HepG2 (cell line): ENCODE measurements at regions of chr5 and their contacts with region 1.

Region 1: DNA sequence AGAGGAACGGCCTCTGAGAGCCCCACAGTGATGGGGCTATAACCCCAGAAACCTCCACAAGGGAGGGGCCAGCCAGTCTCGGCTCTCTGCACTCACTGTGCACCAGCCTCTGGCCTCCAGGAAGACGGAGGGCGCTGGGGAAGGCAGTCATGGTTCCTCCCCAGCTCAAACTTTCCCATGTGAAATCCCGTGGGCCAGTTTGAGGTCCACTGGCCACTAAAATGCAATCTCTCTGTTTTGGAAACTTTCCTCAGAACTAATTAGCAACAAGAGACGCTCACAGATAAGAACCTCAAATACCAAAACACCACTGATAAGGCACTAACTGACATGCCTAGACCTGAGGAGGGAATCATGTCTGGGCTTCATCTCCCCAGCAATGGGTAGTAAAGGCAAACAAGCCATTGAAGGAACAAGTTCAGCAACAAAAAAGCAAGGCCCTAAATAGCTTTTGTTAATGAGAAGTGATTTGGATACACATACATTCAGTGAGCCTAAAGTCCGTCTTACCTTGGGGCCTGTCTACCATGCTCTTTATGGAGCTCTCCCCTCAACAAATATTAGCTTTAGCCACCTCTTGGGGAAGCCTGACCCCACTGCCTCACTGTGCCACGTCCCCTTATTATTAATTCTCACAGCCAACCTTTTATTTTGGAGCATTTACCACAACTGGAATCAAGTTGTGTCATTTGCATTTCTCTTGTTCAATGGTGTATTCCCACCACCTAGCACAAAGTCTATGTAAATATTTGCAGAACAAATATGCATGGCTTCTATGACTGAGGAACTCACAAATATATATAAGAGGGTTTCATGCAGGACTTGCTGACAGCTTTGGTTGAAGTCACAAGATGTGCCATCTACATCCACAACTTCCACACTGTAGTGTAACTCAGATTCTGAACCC is 56.1 kb upstream of the GLRX start:
- DNase-seq: peak; percentile 95
- ATAC-seq: peak; percentile 79
- H3K4me3 ChIP-seq: peak overlapping the region; percentile 24 to 60 (median 24); a peak in 4 of 6 replicates
- H3K27ac ChIP-seq: peak overlapping the region; percentile 96
- H3K4me1 ChIP-seq: peaks cover 83% of the 10 kb centered on the region
- H3K27me3 ChIP-seq: no peaks in the 10 kb centered on the region
- CTCF ChIP-seq: peak; percentile 19; the same call in 1 of the 2 replicates
- EP300 ChIP-seq: peak in 1 of 2 experiments; percentile 86; a peak in 2 of 4 replicates
- POLR2A ChIP-seq: peak; percentile 41 to 54; a peak in 2 of 4 replicates
- RAD21 ChIP-seq: no peak

Region 2: GRCh38 chr5:95142145-95142544 is 736.5 kb before region 1 on chr5:
- CTCF ChIA-PET with region 1: no interaction called
- POLR2A ChIA-PET with region 1: no interaction called
- in situ Hi-C with region 1: no loop called
- intact Hi-C with region 1: no loop called
- DNase-seq: no peak
- ATAC-seq: no peak
- H3K4me3 ChIP-seq: no peak overlapping the region
- H3K27ac ChIP-seq: no peak overlapping the region
- H3K4me1 ChIP-seq: peaks cover 6% of the 10 kb centered on the region; the same call in 1 of the 2 replicates
- H3K27me3 ChIP-seq: no peaks in the 10 kb centered on the region; a peak in 1 of 5 replicates
- CTCF ChIP-seq: no peak
- EP300 ChIP-seq: no peak
- POLR2A ChIP-seq: no peak
- RAD21 ChIP-seq: no peak

Region 3: GRCh38 chr5:95864944-95865504 is 13.6 kb before region 1 on chr5:
- CTCF ChIA-PET with region 1: no interaction called
- POLR2A ChIA-PET with region 1: interaction called, 128 read pairs
- in situ Hi-C with region 1: no loop called
- intact Hi-C with region 1: loop called (anchors 1 kb)
- DNase-seq: peak; percentile 99
- ATAC-seq: peak; percentile 91
- H3K4me3 ChIP-seq: peak overlapping the region in 2 of 3 experiments; percentile 32 to 41; a peak in 3 of 6 replicates
- H3K27ac ChIP-seq: peak overlapping the region; percentile 98
- H3K4me1 ChIP-seq: peaks cover 72% of the 10 kb centered on the region
- H3K27me3 ChIP-seq: no peaks in the 10 kb centered on the region
- CTCF ChIP-seq: no peak
- EP300 ChIP-seq: peak; percentile 48 to 89; a peak in 2 of 4 replicates
- POLR2A ChIP-seq: peak; percentile 54 to 73; a peak in 3 of 4 replicates
- RAD21 ChIP-seq: no peak

Region 4: DNA sequence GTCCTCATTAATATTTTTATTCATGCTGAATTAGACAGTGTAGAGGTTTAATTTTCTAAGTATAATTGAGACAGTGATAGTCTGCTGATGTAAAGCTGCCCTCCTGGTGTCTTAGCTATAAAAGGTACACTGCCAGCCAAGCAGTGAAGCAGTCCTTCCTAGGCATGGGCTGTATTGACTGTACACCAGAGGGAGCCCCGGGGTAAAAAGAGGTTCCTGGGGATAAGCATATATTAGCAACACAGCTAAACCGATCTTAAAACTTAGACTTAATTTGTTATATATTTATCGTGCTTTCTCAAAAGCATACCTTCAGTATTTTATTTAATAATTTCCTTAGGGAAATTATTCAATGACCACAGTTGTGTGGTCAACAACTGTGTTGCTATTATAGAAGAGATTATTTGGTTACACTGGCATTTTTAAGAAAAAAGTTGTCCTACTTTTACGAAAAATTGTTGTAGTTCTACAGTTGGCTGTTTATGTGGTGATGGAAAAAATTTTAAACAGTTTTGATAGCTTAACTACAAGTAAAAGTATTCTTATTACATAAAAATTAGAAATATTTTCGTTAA is 14.2 kb after region 1 on chr5:
- CTCF ChIA-PET with region 1: no interaction called
- POLR2A ChIA-PET with region 1: interaction called, 17 read pairs
- in situ Hi-C with region 1: no loop called
- intact Hi-C with region 1: no loop called
- DNase-seq: peak; percentile 48
- ATAC-seq: peak; percentile 76
- H3K4me3 ChIP-seq: no peak overlapping the region
- H3K27ac ChIP-seq: no peak overlapping the region
- H3K4me1 ChIP-seq: peaks cover 53% of the 10 kb centered on the region
- H3K27me3 ChIP-seq: no peaks in the 10 kb centered on the region
- CTCF ChIP-seq: peak; percentile 59
- EP300 ChIP-seq: no peak
- POLR2A ChIP-seq: no peak
- RAD21 ChIP-seq: peak; percentile 72

Region 5: GRCh38 chr5:96017951-96018350 is 139.3 kb after region 1 on chr5:
- CTCF ChIA-PET with region 1: no interaction called
- POLR2A ChIA-PET with region 1: no interaction called
- in situ Hi-C with region 1: no loop called
- intact Hi-C with region 1: no loop called
- DNase-seq: peak; percentile 27
- ATAC-seq: no peak
- H3K4me3 ChIP-seq: no peak overlapping the region
- H3K27ac ChIP-seq: no peak overlapping the region
- H3K4me1 ChIP-seq: peaks cover 24% of the 10 kb centered on the region
- H3K27me3 ChIP-seq: no peaks in the 10 kb centered on the region
- CTCF ChIP-seq: no peak
- EP300 ChIP-seq: no peak
- POLR2A ChIP-seq: no peak
- RAD21 ChIP-seq: no peak